ENCODE measurements at regions of chr11 and their contacts with region 1.

Region 1: GRCh38 chr11:44600839-44601383 is 35.4 kb downstream of the CD82 start:
- DNase-seq: no peak

Region 2: DNA sequence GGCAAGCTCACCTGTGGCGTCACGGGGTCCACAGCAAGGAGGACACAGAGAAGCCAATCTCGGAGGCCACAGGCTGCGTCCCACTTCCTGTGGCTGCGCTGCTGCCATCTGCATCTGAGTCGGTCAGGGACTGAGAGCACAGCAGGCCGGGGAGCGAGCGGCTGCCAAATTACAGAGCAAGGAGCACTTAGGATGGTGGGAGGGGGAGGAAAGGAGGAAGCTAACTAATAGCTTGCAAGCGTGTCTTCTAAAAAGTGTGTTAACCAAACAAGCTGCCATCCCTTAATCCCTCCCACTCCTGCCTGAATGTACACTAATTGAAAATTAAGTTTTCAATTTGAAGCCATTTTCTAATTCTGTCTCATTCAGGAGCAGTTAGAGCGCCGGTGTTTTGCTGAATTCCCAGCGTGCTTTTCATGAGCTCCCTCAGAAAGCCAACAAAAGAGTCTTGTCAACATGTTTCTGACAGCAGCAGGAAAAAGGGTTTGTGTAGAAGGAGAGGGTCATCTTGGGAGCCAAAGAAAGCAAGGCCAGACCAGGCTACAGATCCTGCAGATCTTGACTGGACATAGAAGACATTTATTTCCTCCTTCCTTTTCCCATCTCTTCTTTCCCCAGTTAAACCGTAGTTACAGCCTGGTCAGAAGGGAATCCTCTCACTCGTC is 1331.5 kb before region 1 on chr11:
- intact Hi-C with region 1: no loop called
- DNase-seq: no peak

Region 3: DNA sequence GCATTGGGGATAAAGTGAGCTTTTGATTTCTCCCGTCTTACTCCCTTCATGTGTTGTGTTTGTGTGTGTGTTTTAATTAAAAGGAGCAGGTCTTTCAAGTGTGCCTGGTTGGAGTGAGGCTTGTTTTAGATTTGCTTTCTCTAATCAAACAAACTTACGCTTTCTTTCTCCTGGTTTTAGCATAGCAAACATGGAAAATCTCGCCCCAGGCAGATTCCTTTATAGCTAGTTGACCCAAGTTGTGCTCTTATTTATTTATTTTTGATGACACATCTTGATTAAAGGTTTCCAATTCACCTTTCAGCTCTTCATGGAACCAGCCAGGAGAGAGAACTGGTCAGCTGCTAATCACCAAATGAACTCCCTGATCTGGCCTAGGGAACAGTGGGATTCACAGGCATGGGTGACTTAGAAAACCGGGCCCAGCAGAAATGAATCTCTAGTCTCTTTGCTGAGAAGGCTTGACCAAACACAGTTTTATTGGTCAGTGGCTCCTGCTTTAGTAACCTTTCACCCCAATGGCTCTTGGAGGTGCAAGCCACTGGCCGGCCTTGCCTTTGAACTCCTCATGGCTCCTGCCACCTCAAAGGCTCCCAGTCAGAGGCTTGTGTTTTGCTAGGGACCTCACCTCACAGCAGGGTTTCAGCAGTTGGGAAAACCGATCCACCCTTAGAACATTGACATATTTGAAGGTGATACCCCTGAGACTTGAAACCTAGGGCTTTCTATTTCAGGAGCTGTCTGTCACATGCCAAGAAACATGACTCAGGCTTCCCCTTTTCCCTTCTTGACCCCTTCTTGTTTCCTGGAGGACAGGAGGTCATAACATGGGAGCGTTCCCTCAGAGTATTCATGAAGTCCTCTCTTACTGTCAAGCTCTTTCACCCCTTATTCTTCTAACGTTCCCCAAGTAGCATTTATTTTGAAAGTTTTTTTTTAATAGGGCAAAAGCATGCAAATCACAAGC is 456.7 kb before region 1 on chr11:
- intact Hi-C with region 1: no loop called
- DNase-seq: no peak

Region 4: DNA sequence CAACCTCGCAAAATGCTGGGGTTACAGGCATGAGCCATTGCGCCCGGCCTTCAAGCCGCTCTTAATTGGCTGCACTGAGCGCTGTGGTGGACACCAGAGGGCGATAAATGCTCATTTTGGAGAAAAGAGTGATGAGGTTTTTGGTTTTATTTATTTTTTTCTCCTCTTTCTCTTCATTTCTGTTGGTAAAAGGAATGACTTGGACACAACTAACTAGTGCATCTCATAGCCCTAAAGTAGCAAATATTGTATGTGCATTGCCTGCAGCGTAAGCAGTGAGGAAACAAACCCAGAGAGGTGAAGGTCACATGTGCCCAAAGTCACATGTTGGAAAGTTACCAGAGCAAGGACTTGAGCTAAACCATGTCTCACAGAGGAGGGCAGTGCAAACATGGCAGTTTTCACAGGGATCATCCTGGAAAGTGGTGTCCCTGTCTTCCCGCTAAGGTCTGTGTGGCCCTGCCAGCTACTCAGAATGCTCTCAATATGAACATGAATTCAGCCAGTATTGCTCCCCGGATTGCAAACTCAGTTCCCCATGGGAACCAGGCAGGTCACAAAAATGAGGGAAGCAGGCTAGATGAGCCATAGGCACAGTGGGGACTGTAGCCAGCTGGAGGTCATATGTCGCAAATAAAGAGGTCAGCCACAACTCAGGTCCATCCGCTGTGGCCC is 44.0 kb before region 1 on chr11:
- intact Hi-C with region 1: loop called in 1 of 2 experiments (anchors 1 kb)
- DNase-seq: no peak

Measured in posterior vena cava (tissue), 2 donors.